Posterior vena cava (tissue), 2 donors: ENCODE measurements at regions of chr11 and their contacts with region 1.

Region 1: DNA sequence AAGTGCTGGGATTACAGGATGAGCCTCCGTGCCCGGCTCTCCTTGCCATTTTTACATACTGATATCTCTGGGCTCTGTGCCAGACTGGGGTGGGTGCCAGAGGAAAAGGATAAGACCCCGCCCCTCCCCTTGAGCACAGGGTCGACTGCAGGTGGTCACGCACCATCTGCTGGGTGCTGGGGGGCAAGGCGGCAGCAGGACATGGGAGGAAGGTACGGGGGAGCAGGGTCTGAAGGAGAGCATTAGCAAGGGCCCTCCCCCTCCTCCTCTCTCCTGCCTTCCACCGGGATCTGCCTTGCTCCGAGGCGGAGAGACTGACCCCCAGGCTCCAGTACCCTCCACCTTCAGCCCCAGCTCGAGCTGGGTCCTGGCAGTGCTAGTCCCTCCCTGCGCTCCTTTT is 9.7 kb upstream of the PGA3 start:
- DNase-seq: no peak

Region 2: GRCh38 chr11:59401262-59401552 is 1792.4 kb before region 1 on chr11:
- intact Hi-C with region 1: no loop called
- DNase-seq: no peak

Region 3: GRCh38 chr11:60821827-60822599 is 371.6 kb before region 1 on chr11:
- intact Hi-C with region 1: loop called in 1 of 2 experiments (anchors 5 kb)
- DNase-seq: no peak